ENCODE measurements at regions of chr10 and their contacts with region 1.

Region 1: GRCh38 chr10:4839401-4839800 is 13.4 kb downstream of the AKR1E2 start:
- DNase-seq: peak in 1 of 2 experiments; percentile 34
- H3K4me3 ChIP-seq: no peak overlapping the region
- H3K4me3 Mint-ChIP-seq: no peak overlapping the region
- H3K27ac Mint-ChIP-seq: no peak overlapping the region
- H3K4me1 ChIP-seq: no peaks in the 10 kb centered on the region
- H3K4me1 Mint-ChIP-seq: no peaks in the 10 kb centered on the region
- H3K27me3 ChIP-seq: no peaks in the 10 kb centered on the region
- H3K27me3 Mint-ChIP-seq: no peaks in the 10 kb centered on the region
- CTCF ChIP-seq: peak in 1 of 2 experiments; percentile 45

Region 2: GRCh38 chr10:4825851-4826665 is 13.3 kb before region 1 on chr10 and contains the start of gene AKR1E2:
- CTCF ChIA-PET with region 1: interaction called, 7 read pairs
- POLR2A ChIA-PET with region 1: interaction called, 10 read pairs
- intact Hi-C with region 1: no loop called
- DNase-seq: peak; percentile 100
- H3K4me3 ChIP-seq: peak within 1 kb of the TSS; percentile 56
- H3K4me3 Mint-ChIP-seq: peak within 1 kb of the TSS; percentile 98
- H3K27ac Mint-ChIP-seq: peak within 1 kb of the TSS; percentile 94
- H3K4me1 ChIP-seq: peaks cover 19% of the 10 kb centered on the region
- H3K4me1 Mint-ChIP-seq: peaks cover 12% of the 10 kb centered on the region
- H3K27me3 ChIP-seq: no peaks in the 10 kb centered on the region
- H3K27me3 Mint-ChIP-seq: peaks cover 5% of the 10 kb centered on the region
- CTCF ChIP-seq: no peak
- total RNA-seq, gene AKR1E2: 68.3 and 68.5 TPM in 2 replicates